ENCODE measurements at regions of chr7 and their contacts with region 1.

Region 1: GRCh38 chr7:1473864-1474512 is 14.7 kb upstream of the MICALL2 start:
- DNase-seq: peak; percentile 86 to 88
- ATAC-seq: peak; percentile 48 to 83 (median 72)
- H3K4me3 ChIP-seq: no peak overlapping the region
- H3K27ac ChIP-seq: no peak overlapping the region
- H3K4me1 ChIP-seq: peaks cover 0 to 11% (median 4%) of the 10 kb centered on the region in 9 donors
- H3K27me3 ChIP-seq: no peaks in the 10 kb centered on the region
- CTCF ChIP-seq: peak; percentile 78 to 95 (median 94)

Region 2: GRCh38 chr7:1425292-1426136 is 48.5 kb before region 1 on chr7:
- intact Hi-C with region 1: loop called in 4 of 10 experiments (anchors 5 to 10 kb)
- DNase-seq: no peak
- ATAC-seq: peak in 1 of 8 donors; percentile 22
- H3K4me3 ChIP-seq: no peak overlapping the region
- H3K27ac ChIP-seq: no peak overlapping the region
- H3K4me1 ChIP-seq: peaks cover 0 to 8% (median 3%) of the 10 kb centered on the region in 9 donors
- H3K27me3 ChIP-seq: peaks cover 5 to 68% (median 53%) of the 10 kb centered on the region in 7 donors
- CTCF ChIP-seq: no peak

Region 3: GRCh38 chr7:1432411-1433082 is 41.4 kb before region 1 on chr7:
- intact Hi-C with region 1: loop called in 6 of 10 experiments (anchors 1 to 10 kb)
- DNase-seq: peak; percentile 65 to 78
- ATAC-seq: peak; percentile 48 to 83 (median 65)
- H3K4me3 ChIP-seq: no peak overlapping the region
- H3K27ac ChIP-seq: no peak overlapping the region
- H3K4me1 ChIP-seq: peaks cover 0 to 8% (median 0%) of the 10 kb centered on the region in 9 donors
- H3K27me3 ChIP-seq: peaks cover 5 to 41% (median 34%) of the 10 kb centered on the region in 7 donors
- CTCF ChIP-seq: peak; percentile 87 to 99 (median 97)

Region 4: GRCh38 chr7:1439373-1440363 is 34.3 kb before region 1 on chr7:
- intact Hi-C with region 1: loop called in 4 of 10 experiments (anchors 5 kb)
- DNase-seq: no peak
- ATAC-seq: peak in 1 of 8 donors; percentile 23
- H3K4me3 ChIP-seq: no peak overlapping the region
- H3K27ac ChIP-seq: no peak overlapping the region
- H3K4me1 ChIP-seq: no peaks in the 10 kb centered on the region
- H3K27me3 ChIP-seq: no peaks in the 10 kb centered on the region
- CTCF ChIP-seq: peak in 4 of 9 donors; percentile 12 to 29 (median 26)

Measured in heart right ventricle (tissue), 16 donors.